GM12878 (cell line): ENCODE measurements at regions of chr10 and their contacts with region 1.

Region 1: GRCh38 chr10:22316285-22317120 is at the start of gene COMMD3:
- DNase-seq: peak; percentile 40
- ATAC-seq: peak; percentile 83
- H3K4me3 ChIP-seq: peak within 1 kb of the TSS; percentile 95
- H3K27ac ChIP-seq: peak within 1 kb of the TSS; percentile 89
- H3K4me1 ChIP-seq: peaks cover 18% of the 10 kb centered on the region
- H3K27me3 ChIP-seq: no peaks in the 10 kb centered on the region
- CTCF ChIP-seq: no peak
- EP300 ChIP-seq: no peak
- POLR2A ChIP-seq: peak; percentile 94
- RAD21 ChIP-seq: no peak
- polyA plus RNA-seq, gene COMMD3: 238 to 248 TPM

Region 2: GRCh38 chr10:21525367-21526183 is 790.9 kb before region 1 on chr10 and contains the start of gene SKIDA1:
- CTCF ChIA-PET with region 1: no interaction called
- POLR2A ChIA-PET with region 1: no interaction called
- RAD21 ChIA-PET with region 1: no interaction called
- SMC1A ChIA-PET with region 1: no interaction called
- in situ Hi-C with region 1: loop called (anchors 5 kb)
- intact Hi-C with region 1: no loop called
- DNase-seq: no peak
- ATAC-seq: peak; percentile 71
- H3K4me3 ChIP-seq: peak within 1 kb of the TSS; percentile 80
- H3K27ac ChIP-seq: peak within 1 kb of the TSS; percentile 39
- H3K4me1 ChIP-seq: peaks cover 13% of the 10 kb centered on the region
- H3K27me3 ChIP-seq: peaks cover 0 to 4% of the 10 kb centered on the region in 2 experiments; a peak in 1 of 4 replicates
- CTCF ChIP-seq: no peak
- EP300 ChIP-seq: no peak
- POLR2A ChIP-seq: no peak; the same call in 1 of the 2 replicates
- RAD21 ChIP-seq: no peak
- polyA plus RNA-seq, gene SKIDA1: 0.08 to 0.29 TPM

Region 3: GRCh38 chr10:22228943-22229801 is 87.3 kb before region 1 on chr10:
- CTCF ChIA-PET with region 1: no interaction called
- POLR2A ChIA-PET with region 1: interaction called, 11 read pairs
- RAD21 ChIA-PET with region 1: interaction called, 13 read pairs
- SMC1A ChIA-PET with region 1: interaction called, 9 read pairs
- in situ Hi-C with region 1: no loop called
- intact Hi-C with region 1: loop called (anchors 2 kb)
- DNase-seq: peak; percentile 83
- ATAC-seq: peak; percentile 89
- H3K4me3 ChIP-seq: peak overlapping the region; percentile 68
- H3K27ac ChIP-seq: peak overlapping the region; percentile 24; the same call in 1 of the 2 replicates
- H3K4me1 ChIP-seq: peaks cover 7% of the 10 kb centered on the region; the same call in 1 of the 2 replicates
- H3K27me3 ChIP-seq: no peaks in the 10 kb centered on the region; a peak in 1 of 4 replicates
- CTCF ChIP-seq: no peak
- EP300 ChIP-seq: peak in 1 of 2 experiments; percentile 72; a peak in 2 of 4 replicates
- POLR2A ChIP-seq: peak; percentile 68
- RAD21 ChIP-seq: no peak

Region 4: DNA sequence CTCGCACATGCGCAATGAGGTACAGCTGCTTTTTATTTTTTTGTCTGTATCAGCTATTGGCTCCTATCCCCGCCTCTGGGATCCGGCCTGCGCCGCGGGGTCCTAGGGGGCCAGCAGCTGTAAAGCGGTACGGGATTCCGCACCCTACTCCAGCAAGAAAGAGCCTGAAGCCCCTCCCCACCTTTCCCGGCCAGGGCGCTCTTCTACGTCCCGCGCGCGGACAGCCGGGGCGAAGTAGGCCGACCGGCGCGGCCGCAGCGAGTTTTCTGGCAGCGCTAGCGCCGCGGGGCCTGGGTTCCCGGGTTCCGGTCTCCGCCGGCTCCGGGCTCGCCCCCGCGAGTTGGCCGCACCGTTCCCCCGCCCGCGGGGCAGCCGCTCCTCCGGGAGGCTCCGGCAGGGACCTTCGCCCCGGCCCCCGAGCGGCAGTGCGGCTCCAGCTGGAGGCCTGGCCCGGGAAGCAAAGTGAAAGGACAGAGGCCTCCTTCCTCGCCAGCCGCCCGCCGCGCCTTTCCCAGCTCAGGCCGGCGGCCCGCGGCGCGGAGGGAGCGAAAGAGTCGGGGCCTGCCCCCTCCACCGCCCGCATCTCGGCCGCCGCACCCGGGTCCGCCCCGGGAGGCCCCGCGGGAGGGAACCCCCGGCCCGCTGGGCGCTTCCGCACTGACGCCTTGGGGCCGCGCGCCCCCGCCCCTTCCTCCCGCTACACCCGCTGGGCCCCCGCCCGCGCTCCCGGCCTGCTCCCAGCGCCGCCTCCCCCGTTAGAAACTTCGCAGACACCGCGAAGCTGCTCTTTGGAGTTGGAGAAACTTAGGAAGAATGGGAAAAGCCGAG is 24.1 kb after region 1 on chr10:
- CTCF ChIA-PET with region 1: interaction called, 3 read pairs
- POLR2A ChIA-PET with region 1: interaction called, 15 read pairs
- RAD21 ChIA-PET with region 1: interaction called, 16 read pairs
- SMC1A ChIA-PET with region 1: interaction called, 9 read pairs
- in situ Hi-C with region 1: no loop called
- intact Hi-C with region 1: no loop called
- DNase-seq: peak; percentile 69
- ATAC-seq: peak; percentile 79
- H3K4me3 ChIP-seq: peak overlapping the region; percentile 66
- H3K27ac ChIP-seq: peak overlapping the region; percentile 77
- H3K4me1 ChIP-seq: peaks cover 24% of the 10 kb centered on the region
- H3K27me3 ChIP-seq: peaks cover 11 to 33% of the 10 kb centered on the region in 2 experiments
- CTCF ChIP-seq: no peak
- EP300 ChIP-seq: 0 out of 4 replicates have a peak, but pooled peaks of 1 of the 2 experiments have one; percentile 16
- POLR2A ChIP-seq: no peak; the same call in none of the 2 replicates
- RAD21 ChIP-seq: no peak

Region 5: DNA sequence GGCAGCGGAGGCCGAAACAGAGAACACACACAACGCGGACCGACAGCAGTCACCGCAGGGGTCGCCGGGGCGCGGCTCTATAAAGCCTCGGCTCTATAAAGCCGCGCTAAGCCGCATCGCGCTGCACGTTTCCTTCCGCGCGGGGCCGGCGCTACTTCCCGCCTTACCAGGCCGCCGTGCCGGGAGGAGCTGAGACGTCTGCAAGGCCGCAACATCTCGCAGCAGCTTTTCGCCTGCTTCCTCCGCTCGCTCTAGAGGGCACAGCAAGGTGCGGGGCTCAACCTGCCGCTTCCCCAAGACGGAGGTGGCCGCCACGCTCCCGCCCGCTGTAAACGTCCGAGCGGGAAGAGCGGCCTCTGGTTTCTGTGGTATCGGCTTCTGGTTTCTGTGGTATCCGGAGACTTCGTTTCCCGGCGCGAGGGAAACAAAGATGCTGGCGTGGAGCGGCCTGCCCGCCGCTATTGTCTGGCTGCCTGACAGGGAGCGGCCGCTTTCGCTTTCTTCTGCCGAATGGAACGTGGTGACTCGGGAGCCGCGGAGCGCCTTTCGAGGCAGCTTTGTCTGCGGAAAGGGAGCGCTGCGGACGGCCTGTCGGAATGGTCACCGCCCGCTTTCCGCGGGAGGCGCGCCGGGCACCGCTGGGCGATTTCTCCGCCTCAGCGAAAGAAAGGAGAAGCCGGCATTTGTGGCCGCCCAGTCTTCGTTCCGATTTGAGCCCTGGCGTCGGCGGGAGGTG is 120.5 kb after region 1 on chr10:
- CTCF ChIA-PET with region 1: no interaction called
- POLR2A ChIA-PET with region 1: no interaction called
- RAD21 ChIA-PET with region 1: interaction called, 5 read pairs
- SMC1A ChIA-PET with region 1: interaction called, 3 read pairs
- in situ Hi-C with region 1: no loop called
- intact Hi-C with region 1: loop called (anchors 2 kb)
- DNase-seq: peak; percentile 36
- ATAC-seq: peak; percentile 88
- H3K4me3 ChIP-seq: peak overlapping the region; percentile 71
- H3K27ac ChIP-seq: peak overlapping the region; percentile 45
- H3K4me1 ChIP-seq: peaks cover 10% of the 10 kb centered on the region
- H3K27me3 ChIP-seq: no peaks in the 10 kb centered on the region; a peak in 1 of 4 replicates
- CTCF ChIP-seq: 0 out of 6 replicates have a peak, but pooled peaks of 2 of the 3 experiments have one; percentile 1 to 6
- EP300 ChIP-seq: no peak
- POLR2A ChIP-seq: peak; percentile 98
- RAD21 ChIP-seq: peak; percentile 32; the same call in 1 of the 2 replicates

Region 6: GRCh38 chr10:22625523-22626290 is 309.2 kb after region 1 on chr10:
- CTCF ChIA-PET with region 1: no interaction called
- POLR2A ChIA-PET with region 1: no interaction called
- RAD21 ChIA-PET with region 1: no interaction called
- SMC1A ChIA-PET with region 1: no interaction called
- in situ Hi-C with region 1: no loop called
- intact Hi-C with region 1: no loop called
- DNase-seq: no peak
- ATAC-seq: no peak
- H3K4me3 ChIP-seq: no peak overlapping the region
- H3K27ac ChIP-seq: 0 out of 2 replicates have a peak overlapping the region, but pooled peaks have one; percentile 23
- H3K4me1 ChIP-seq: peaks cover 26% of the 10 kb centered on the region
- H3K27me3 ChIP-seq: no peaks in the 10 kb centered on the region
- CTCF ChIP-seq: no peak
- EP300 ChIP-seq: no peak
- POLR2A ChIP-seq: no peak
- RAD21 ChIP-seq: no peak